ENCODE measurements at regions of chr19 and their contacts with region 1.

Region 1: GRCh38 chr19:36528194-36528920 is at the start of gene ZNF260:
- DNase-seq: peak; percentile 97 to 98
- ATAC-seq: peak; percentile 97 to 98 (median 98)
- H3K4me3 ChIP-seq: peak within 1 kb of the TSS; percentile 79
- H3K27ac ChIP-seq: peak within 1 kb of the TSS; percentile 90
- H3K4me1 ChIP-seq: peaks cover 4% of the 10 kb centered on the region
- H3K27me3 ChIP-seq: no peaks in the 10 kb centered on the region
- CTCF ChIP-seq: no peak
- total RNA-seq, gene ZNF260: 2.5 to 5.1 (median 3.7) TPM

Region 2: DNA sequence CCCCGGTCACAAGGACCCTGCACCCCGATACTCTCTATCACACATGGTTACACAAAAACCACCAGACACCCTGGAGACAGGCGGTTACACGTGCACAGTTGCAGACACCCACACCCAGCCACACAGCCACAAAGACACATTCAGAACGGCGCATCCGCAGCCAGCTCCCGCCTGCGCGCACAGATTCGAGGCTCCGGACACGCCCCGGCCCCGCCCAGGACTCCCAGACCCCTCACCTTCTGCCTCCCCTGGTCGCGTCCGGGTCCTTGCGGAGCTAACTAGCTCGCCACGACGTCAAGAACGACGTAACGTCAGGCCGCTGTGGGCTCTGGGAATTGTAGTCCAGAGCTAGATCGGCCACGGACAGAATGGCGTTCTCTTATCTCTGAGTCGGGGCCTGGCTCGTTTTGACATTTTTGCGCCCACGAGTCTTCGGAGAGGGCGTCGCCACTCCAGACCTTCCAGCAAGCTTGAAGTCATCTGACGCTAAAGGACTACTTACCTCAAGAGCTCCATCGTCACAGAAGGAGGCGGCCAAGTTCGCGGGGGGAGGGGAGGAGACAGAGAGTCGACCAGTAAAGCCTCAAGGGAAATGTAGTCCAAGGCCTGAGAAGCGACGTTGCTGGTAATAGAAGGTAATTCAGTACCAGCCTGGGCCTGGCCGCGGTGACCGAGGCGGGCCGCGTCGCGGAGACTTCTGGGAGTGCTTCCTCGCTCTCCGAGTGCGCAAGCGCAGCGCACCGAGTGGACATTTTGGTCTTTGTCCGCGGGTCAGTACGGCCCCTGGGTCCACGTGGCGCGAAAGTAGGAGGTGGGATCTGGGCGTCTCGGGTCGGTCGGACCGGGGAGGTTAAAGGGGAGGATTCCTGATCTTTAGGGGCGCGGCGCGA is 313.7 kb before region 1 on chr19 and contains the starts of genes ZNF146 and ZNF565:
- intact Hi-C with region 1: loop called in 1 of 2 experiments (anchors 5 kb)
- DNase-seq: peak; percentile 98 to 99
- ATAC-seq: peak; percentile 95 to 96 (median 96)
- H3K4me3 ChIP-seq: peak within 1 kb of the TSS; percentile 81
- H3K27ac ChIP-seq: peak within 1 kb of the TSS; percentile 93
- H3K4me1 ChIP-seq: peaks cover 23% of the 10 kb centered on the region
- H3K27me3 ChIP-seq: no peaks in the 10 kb centered on the region
- CTCF ChIP-seq: no peak
- total RNA-seq, gene ZNF146: 31.2 to 78.4 (median 65.7) TPM
- total RNA-seq, gene ZNF565: 2.5 to 4.1 (median 3.6) TPM

Region 3: DNA sequence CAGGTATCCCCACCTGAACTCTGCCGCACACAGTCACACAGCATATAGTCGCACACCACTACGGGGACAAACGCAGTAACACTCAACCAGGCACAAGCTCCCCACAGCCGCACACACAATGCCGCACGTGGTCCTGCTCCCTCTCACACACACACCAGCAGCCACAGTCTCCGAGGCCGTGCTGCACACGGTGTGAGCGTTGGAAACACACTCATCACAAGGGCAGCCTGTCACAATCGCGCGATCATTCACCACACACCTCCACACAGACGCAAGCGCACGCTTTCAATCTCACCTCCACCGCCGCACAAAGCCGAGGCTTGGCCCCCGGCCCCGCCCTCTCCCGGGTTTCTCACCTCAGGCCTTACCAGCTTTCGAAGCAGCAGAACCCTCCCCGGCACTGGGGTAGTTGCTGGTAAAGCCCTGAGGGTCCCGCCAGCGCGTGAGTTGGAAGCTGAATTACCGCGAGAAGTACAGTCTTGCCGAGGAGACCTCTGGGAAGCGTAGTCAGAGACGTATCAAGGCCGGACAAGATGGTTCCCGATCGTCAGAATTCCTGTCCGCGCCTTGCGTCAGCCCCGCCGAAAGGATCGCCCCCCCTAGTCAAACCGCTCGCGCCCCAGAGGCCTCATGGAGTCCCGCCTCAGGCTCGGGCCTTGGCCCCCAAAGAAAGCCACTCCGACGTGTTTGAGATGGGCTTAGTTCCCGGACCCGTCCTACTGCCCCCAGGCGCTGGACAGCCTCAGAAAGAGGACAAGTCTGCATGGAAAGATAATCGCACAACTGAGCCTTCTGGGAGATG is 39.0 kb before region 1 on chr19 and contains the start of gene ZNF566:
- intact Hi-C with region 1: loop called in 1 of 2 experiments (anchors 2 kb)
- DNase-seq: peak; percentile 89 to 93
- ATAC-seq: peak; percentile 99 to 100 (median 99)
- H3K4me3 ChIP-seq: peak within 1 kb of the TSS; percentile 97
- H3K27ac ChIP-seq: peak within 1 kb of the TSS; percentile 96
- H3K4me1 ChIP-seq: peaks cover 9% of the 10 kb centered on the region
- H3K27me3 ChIP-seq: no peaks in the 10 kb centered on the region
- CTCF ChIP-seq: no peak
- total RNA-seq, gene ZNF566: 5.2 to 8.0 (median 6.1) TPM

Region 4: GRCh38 chr19:36547001-36547732 is 18.8 kb after region 1 on chr19:
- intact Hi-C with region 1: no loop called
- DNase-seq: no peak
- ATAC-seq: no peak
- H3K4me3 ChIP-seq: no peak overlapping the region
- H3K27ac ChIP-seq: no peak overlapping the region
- H3K4me1 ChIP-seq: no peaks in the 10 kb centered on the region
- H3K27me3 ChIP-seq: no peaks in the 10 kb centered on the region
- CTCF ChIP-seq: no peak

Region 5: DNA sequence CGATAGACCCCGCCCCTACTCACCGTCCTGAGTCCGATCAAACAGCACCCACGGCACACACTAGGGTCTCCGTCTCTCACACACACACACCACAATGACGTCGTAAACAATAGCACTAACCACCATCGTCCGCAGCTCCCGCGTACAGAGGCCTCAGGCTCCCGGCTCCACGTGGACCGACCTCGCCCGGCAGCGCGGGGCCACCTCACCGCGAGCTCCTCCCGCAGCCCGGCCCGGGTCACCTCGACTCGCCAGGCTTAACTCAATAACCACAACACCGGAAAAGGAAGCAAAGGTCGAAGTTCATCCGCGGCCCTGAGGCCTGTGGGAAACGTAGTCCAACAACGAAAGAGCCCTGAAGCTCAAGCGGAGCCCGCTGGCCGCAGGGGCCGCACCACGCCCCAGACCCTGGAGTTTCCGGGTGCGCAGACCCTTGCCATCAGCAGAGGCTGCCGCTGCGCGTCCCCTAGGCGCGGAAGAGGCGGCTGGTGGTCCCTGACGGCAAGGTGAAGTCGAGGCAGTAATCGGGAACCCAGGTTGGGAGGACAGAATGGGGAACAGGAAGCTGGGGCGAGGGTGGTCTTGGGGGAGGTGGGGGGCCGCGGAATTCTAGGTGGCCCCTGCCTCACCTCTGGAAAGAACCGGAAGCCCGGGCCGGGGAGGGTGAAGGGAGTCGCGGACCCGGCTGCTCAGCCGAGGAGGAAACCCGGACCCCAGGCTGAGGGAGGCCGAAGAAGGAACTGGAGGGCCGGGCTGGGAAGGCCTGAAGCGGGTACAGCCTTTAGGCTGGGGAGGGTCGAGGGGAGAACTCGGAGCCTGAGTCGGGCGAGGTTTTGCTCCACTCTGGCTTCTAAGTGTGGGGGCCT is 44.9 kb after region 1 on chr19 and contains the start of gene ZNF529:
- intact Hi-C with region 1: loop called (anchors 2 to 5 kb)
- DNase-seq: peak; percentile 89 to 90
- ATAC-seq: peak; percentile 98 to 100 (median 99)
- H3K4me3 ChIP-seq: peak within 1 kb of the TSS; percentile 97
- H3K27ac ChIP-seq: peak within 1 kb of the TSS; percentile 91
- H3K4me1 ChIP-seq: peaks cover 5% of the 10 kb centered on the region
- H3K27me3 ChIP-seq: no peaks in the 10 kb centered on the region
- CTCF ChIP-seq: no peak
- total RNA-seq, gene ZNF529: 6.1 to 10.4 (median 8.1) TPM

Measured in psoas muscle (tissue), 8 donors.